Activated CD8-positive, alpha-beta memory T cell treated with anti-CD3 and anti-CD28 coated beads, Interleukin-2, amount 10 ng/mL, durations not matched to agents 7 days and 5 days (primary cell): ENCODE measurements at regions of chr9 and their contacts with region 1.

Region 1: DNA sequence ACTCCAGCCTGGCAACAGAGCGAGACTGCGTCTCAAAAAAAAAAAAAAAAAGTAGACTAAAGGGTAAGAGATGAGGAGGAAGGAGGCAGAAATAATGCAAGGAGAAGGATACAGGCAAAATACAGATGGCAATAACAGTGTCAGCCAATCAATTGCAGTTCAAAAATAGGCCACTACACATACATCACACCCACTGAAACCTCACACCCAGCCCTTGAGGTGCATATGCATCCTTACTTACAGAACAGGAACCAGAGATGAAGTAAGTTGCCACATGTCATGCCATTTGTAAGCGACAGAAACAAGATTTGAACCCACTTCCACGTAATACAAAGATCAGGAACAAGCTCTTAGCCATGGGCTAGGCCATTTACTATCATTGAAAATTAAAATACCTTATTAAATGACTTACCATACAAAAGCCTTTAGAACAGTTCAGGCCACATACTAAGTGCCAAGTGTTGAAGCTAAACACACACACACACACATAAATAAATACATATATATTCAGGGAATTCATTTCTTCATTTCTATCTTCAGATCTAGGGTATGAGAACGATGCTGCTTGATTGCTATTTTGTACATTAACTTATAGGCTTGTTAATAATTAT is 98.4 kb downstream of the FNBP1 start:
- DNase-seq: peak; percentile 86
- ATAC-seq: peak; percentile 98
- H3K4me3 Mint-ChIP-seq: peak overlapping the region; percentile 8
- H3K27ac Mint-ChIP-seq: peak overlapping the region; percentile 75
- H3K4me1 Mint-ChIP-seq: peaks cover 53% of the 10 kb centered on the region
- H3K27me3 Mint-ChIP-seq: no peaks in the 10 kb centered on the region

Region 2: GRCh38 chr9:129696938-129697650 is 247.5 kb before region 1 on chr9:
- CTCF ChIA-PET with region 1: no interaction called
- DNase-seq: no peak
- ATAC-seq: peak; percentile 36
- H3K4me3 Mint-ChIP-seq: no peak overlapping the region
- H3K27ac Mint-ChIP-seq: no peak overlapping the region
- H3K4me1 Mint-ChIP-seq: peaks cover 2% of the 10 kb centered on the region
- H3K27me3 Mint-ChIP-seq: peaks cover 63% of the 10 kb centered on the region

Region 3: GRCh38 chr9:129918296-129918950 is 26.2 kb before region 1 on chr9:
- CTCF ChIA-PET with region 1: no interaction called
- DNase-seq: no peak
- ATAC-seq: no peak
- H3K4me3 Mint-ChIP-seq: no peak overlapping the region
- H3K27ac Mint-ChIP-seq: no peak overlapping the region
- H3K4me1 Mint-ChIP-seq: peaks cover 30% of the 10 kb centered on the region
- H3K27me3 Mint-ChIP-seq: no peaks in the 10 kb centered on the region

Region 4: DNA sequence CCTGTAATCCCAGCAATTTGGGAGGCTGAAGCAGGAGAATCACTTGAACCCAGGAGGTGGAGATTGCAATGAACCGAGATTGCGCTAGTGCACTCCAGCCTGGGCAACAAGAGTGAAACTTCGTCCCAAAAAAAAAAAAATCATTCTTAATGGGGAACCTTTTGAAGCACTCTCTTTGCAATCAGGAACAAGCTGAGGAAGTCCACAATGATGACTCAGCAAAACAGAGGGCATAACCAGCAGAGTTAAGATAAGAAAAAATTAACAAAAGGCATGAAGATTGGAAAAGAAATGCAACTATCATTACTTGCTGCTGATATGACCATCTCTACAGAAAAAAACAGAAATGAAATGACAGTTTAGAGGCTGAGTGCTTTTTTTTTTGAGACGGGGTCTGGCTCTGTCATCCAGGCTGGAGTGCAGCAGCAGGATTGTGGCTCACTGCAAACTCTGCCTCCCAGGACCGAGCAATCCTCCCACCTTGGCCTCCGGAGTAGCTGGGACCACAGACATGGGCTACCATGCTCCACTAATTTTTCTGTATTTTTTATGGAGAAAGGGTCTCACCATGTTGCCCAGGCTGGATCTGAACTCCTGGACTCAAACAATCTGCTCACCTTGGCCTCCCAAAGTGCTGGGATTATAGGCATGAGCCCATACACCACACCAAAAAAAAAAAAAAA is 10.4 kb after region 1 on chr9:
- CTCF ChIA-PET with region 1: interaction called, 19 read pairs
- DNase-seq: no peak
- ATAC-seq: peak; percentile 3
- H3K4me3 Mint-ChIP-seq: no peak overlapping the region
- H3K27ac Mint-ChIP-seq: peak overlapping the region; percentile 80
- H3K4me1 Mint-ChIP-seq: peaks cover 51% of the 10 kb centered on the region
- H3K27me3 Mint-ChIP-seq: no peaks in the 10 kb centered on the region